ENCODE measurements at regions of chr6 and their contacts with region 1.

Region 1: GRCh38 chr6:137823826-137824555 is 43.1 kb upstream of the TNFAIP3 start:
- DNase-seq: peak; percentile 70
- H3K4me3 Mint-ChIP-seq: peak overlapping the region; percentile 81
- H3K27ac Mint-ChIP-seq: peak overlapping the region; percentile 96
- H3K4me1 Mint-ChIP-seq: peaks cover 80% of the 10 kb centered on the region
- H3K27me3 Mint-ChIP-seq: no peaks in the 10 kb centered on the region

Region 2: GRCh38 chr6:137811121-137811915 is 12.7 kb before region 1 on chr6:
- intact Hi-C with region 1: loop called (anchors 1 kb)
- DNase-seq: peak; percentile 69
- H3K4me3 Mint-ChIP-seq: peak overlapping the region; percentile 7
- H3K27ac Mint-ChIP-seq: peak overlapping the region; percentile 90
- H3K4me1 Mint-ChIP-seq: peaks cover 59% of the 10 kb centered on the region
- H3K27me3 Mint-ChIP-seq: no peaks in the 10 kb centered on the region

Measured in activated T-helper 2 cell treated with anti-CD3 and anti-CD28 coated beads, Interferon-gamma antibody, Interleukin-2, Interleukin-4, amounts not matched to agents 10 μg/mL and 5 μg/mL and 100 μg/mL, durations not matched to agents 14 hours and 24 hours and 36 hours (primary cell).